Activated CD4-positive, alpha-beta memory T cell treated with anti-CD3 and anti-CD28 coated beads for 36 hours (primary cell): ENCODE measurements at regions of chrX and their contacts with region 1.

Region 1: GRCh38 chrX:41333744-41334259 is at the start of gene DDX3X:
- DNase-seq: peak; percentile 89
- H3K4me3 Mint-ChIP-seq: peak within 1 kb of the TSS; percentile 93
- H3K27ac Mint-ChIP-seq: peak within 1 kb of the TSS; percentile 100
- H3K4me1 Mint-ChIP-seq: peaks cover 17% of the 10 kb centered on the region
- H3K27me3 Mint-ChIP-seq: peaks cover 1% of the 10 kb centered on the region
- total RNA-seq, gene DDX3X: 216 to 218 TPM

Region 2: GRCh38 chrX:40735325-40736169 is 598.3 kb before region 1 on chrX and contains the start of gene MED14:
- CTCF ChIA-PET with region 1: no interaction called
- POLR2A ChIA-PET with region 1: no interaction called
- intact Hi-C with region 1: loop called (anchors 2 kb)
- DNase-seq: peak; percentile 93
- H3K4me3 Mint-ChIP-seq: peak within 1 kb of the TSS; percentile 84
- H3K27ac Mint-ChIP-seq: peak within 1 kb of the TSS; percentile 92
- H3K4me1 Mint-ChIP-seq: peaks cover 44% of the 10 kb centered on the region
- H3K27me3 Mint-ChIP-seq: no peaks in the 10 kb centered on the region
- total RNA-seq, gene MED14: 46.4 to 49.4 TPM

Region 3: GRCh38 chrX:41275661-41276609 is 57.9 kb before region 1 on chrX:
- CTCF ChIA-PET with region 1: interaction called, 11 read pairs
- POLR2A ChIA-PET with region 1: no interaction called
- intact Hi-C with region 1: loop called (anchors 2 kb)
- DNase-seq: peak; percentile 68
- H3K4me3 Mint-ChIP-seq: peak overlapping the region; percentile 75
- H3K27ac Mint-ChIP-seq: peak overlapping the region; percentile 33
- H3K4me1 Mint-ChIP-seq: no peaks in the 10 kb centered on the region
- H3K27me3 Mint-ChIP-seq: no peaks in the 10 kb centered on the region

Region 4: GRCh38 chrX:41384041-41384705 is 50.4 kb after region 1 on chrX:
- CTCF ChIA-PET with region 1: interaction called, 4 read pairs
- POLR2A ChIA-PET with region 1: interaction called, 3 read pairs
- intact Hi-C with region 1: loop called (anchors 1 kb)
- DNase-seq: peak; percentile 81
- H3K4me3 Mint-ChIP-seq: peak overlapping the region; percentile 49
- H3K27ac Mint-ChIP-seq: peak overlapping the region; percentile 98
- H3K4me1 Mint-ChIP-seq: peaks cover 36% of the 10 kb centered on the region
- H3K27me3 Mint-ChIP-seq: no peaks in the 10 kb centered on the region

Region 5: DNA sequence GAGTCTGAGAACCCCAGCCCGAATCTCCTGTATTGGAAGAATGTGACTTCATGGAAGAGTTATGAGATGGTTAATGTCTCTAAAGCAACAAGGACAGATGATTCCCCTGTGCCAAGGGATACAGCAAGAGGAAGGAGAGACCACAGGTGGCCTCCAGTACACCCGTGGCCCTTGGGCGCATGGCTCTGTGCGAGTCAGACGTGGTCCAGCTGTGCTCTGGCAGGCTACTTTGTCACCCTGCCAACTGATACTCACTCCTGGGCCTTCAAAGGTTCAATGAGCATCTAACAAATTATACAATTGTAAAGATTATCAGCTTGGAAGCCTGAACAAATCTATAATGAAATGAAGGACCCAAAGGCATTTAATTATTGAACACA is 185.0 kb after region 1 on chrX:
- CTCF ChIA-PET with region 1: no interaction called
- POLR2A ChIA-PET with region 1: no interaction called
- intact Hi-C with region 1: loop called (anchors 5 kb)
- DNase-seq: no peak
- H3K4me3 Mint-ChIP-seq: no peak overlapping the region
- H3K27ac Mint-ChIP-seq: peak overlapping the region; percentile 50
- H3K4me1 Mint-ChIP-seq: peaks cover 32% of the 10 kb centered on the region
- H3K27me3 Mint-ChIP-seq: no peaks in the 10 kb centered on the region